CD4-positive, alpha-beta memory T cell (primary cell): ENCODE measurements at regions of chr3 and their contacts with region 1.

Region 1: DNA sequence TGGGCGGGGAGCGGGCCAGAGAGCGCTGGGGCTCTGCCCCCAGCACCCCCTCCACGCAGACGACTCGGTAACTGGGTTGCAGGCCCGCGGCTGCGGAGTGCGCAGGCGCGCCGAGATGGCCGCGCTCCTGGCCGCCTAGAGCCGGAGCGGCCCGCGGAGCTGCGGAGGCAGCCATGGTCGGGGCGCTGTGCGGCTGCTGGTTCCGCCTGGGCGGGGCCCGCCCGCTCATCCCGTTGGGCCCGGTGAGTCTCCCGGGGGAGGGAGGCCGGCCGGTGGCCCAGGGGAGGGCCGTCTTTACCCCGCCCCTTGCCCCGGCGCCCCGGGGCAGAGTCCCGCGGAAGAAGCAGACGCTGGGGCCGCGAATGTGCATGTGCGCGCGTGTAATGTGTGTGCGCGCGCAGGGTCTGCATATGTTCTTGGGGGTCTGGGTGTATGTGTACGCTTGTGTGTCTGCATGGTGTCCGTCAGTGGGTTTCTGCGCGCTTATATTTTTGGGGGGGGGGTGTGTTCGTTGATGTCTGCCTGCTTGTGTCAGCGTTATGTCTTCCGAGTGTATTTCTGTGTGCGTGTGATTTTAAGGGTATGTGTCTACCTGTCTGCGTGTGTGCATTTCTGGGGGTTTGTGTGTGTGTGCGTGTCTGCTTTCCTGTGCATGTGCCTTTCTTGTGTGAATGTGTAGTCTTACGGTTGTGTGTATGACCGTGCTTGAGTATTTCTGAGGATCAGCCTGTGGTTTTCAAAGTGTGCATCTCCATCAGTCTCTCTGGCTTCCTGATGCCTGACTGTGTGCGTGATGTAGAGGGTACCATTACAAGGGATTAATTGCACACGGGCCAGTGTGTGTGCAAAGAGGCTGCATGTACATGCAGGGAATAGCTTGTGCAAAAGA is at the start of gene ABHD14A:
- DNase-seq: peak; percentile 75 to 80 (median 76)
- H3K4me3 ChIP-seq: peak within 1 kb of the TSS; percentile 81 to 95
- H3K4me3 Mint-ChIP-seq: peak within 1 kb of the TSS; percentile 90 to 99 (median 96)
- H3K27ac ChIP-seq: peak within 1 kb of the TSS; percentile 78
- H3K27ac Mint-ChIP-seq: peak within 1 kb of the TSS; percentile 68 to 98 (median 96)
- H3K4me1 ChIP-seq: peaks cover 32% of the 10 kb centered on the region
- H3K4me1 Mint-ChIP-seq: peaks cover 28 to 53% (median 41%) of the 10 kb centered on the region in 4 donors
- H3K27me3 ChIP-seq: no peaks in the 10 kb centered on the region
- H3K27me3 Mint-ChIP-seq: no peaks in the 10 kb centered on the region
- total RNA-seq, gene ABHD14A: 23.7 to 24.5 TPM

Region 2: GRCh38 chr3:51269466-51269865 is 705.7 kb before region 1 on chr3:
- CTCF ChIA-PET with region 1: no interaction called
- POLR2A ChIA-PET with region 1: no interaction called
- intact Hi-C with region 1: no loop called
- DNase-seq: no peak
- H3K4me3 ChIP-seq: no peak overlapping the region
- H3K4me3 Mint-ChIP-seq: no peak overlapping the region
- H3K27ac ChIP-seq: no peak overlapping the region
- H3K27ac Mint-ChIP-seq: peak overlapping the region in 1 of 7 donors; percentile 16
- H3K4me1 ChIP-seq: peaks cover 24% of the 10 kb centered on the region
- H3K4me1 Mint-ChIP-seq: peaks cover 12 to 23% (median 14%) of the 10 kb centered on the region in 4 donors
- H3K27me3 ChIP-seq: no peaks in the 10 kb centered on the region
- H3K27me3 Mint-ChIP-seq: peaks cover 0 to 1% of the 10 kb centered on the region in 2 donors

Region 3: DNA sequence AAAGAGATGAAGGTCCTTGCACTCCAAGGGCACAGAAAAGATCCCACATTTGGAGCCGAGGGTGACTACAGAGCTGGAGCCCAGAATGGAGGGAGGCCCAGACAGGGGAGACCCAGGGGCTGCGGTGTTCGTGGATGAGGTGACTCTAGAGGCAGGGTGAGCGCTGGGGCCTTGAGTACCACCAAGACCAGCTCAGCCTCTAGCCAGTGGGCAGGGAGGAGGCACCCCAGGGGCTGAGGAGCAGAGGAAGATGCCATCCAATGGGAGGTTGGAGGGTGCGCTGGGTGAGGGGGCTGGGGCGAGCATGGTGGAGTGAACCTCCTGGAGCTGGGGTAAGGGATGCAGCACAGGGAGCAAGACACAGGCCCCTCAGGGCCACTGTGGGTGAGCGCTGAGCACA is 46.8 kb before region 1 on chr3:
- CTCF ChIA-PET with region 1: no interaction called
- POLR2A ChIA-PET with region 1: no interaction called
- intact Hi-C with region 1: no loop called
- DNase-seq: no peak
- H3K4me3 ChIP-seq: no peak overlapping the region
- H3K4me3 Mint-ChIP-seq: no peak overlapping the region
- H3K27ac ChIP-seq: no peak overlapping the region
- H3K27ac Mint-ChIP-seq: no peak overlapping the region
- H3K4me1 ChIP-seq: no peaks in the 10 kb centered on the region
- H3K4me1 Mint-ChIP-seq: no peaks in the 10 kb centered on the region
- H3K27me3 ChIP-seq: no peaks in the 10 kb centered on the region
- H3K27me3 Mint-ChIP-seq: no peaks in the 10 kb centered on the region

Region 4: DNA sequence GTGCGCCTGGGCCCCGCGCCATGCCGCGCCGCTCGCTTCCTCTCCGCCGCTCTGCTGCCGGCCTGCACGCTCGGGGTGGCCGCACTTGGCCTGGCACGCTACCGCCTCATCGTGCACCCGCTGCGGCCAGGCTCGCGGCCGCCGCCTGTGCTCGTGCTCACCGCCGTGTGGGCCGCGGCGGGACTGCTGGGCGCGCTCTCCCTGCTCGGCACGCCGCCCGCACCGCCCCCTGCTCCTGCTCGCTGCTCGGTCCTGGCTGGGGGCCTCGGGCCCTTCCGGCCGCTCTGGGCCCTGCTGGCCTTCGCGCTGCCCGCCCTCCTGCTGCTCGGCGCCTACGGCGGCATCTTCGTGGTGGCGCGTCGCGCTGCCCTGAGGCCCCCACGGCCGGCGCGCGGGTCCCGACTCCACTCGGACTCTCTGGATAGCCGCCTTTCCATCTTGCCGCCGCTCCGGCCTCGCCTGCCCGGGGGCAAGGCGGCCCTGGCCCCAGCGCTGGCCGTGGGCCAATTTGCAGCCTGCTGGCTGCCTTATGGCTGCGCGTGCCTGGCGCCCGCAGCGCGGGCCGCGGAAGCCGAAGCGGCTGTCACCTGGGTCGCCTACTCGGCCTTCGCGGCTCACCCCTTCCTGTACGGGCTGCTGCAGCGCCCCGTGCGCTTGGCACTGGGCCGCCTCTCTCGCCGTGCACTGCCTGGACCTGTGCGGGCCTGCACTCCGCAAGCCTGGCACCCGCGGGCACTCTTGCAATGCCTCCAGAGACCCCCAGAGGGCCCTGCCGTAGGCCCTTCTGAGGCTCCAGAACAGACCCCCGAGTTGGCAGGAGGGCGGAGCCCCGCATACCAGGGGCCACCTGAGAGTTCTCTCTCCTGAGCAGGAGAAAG is 19.1 kb before region 1 on chr3:
- CTCF ChIA-PET with region 1: interaction called, 14 read pairs
- POLR2A ChIA-PET with region 1: interaction called, 9 read pairs
- intact Hi-C with region 1: loop called (anchors 1 kb)
- DNase-seq: peak in 1 of 5 donors; percentile 26
- H3K4me3 ChIP-seq: no peak overlapping the region
- H3K4me3 Mint-ChIP-seq: peak overlapping the region; percentile 24 to 67 (median 42)
- H3K27ac ChIP-seq: no peak overlapping the region
- H3K27ac Mint-ChIP-seq: no peak overlapping the region
- H3K4me1 ChIP-seq: peaks cover 15% of the 10 kb centered on the region
- H3K4me1 Mint-ChIP-seq: peaks cover 0 to 8% (median 4%) of the 10 kb centered on the region in 4 donors
- H3K27me3 ChIP-seq: peaks cover 8% of the 10 kb centered on the region
- H3K27me3 Mint-ChIP-seq: peaks cover 5 to 12% of the 10 kb centered on the region in 2 donors

Region 5: GRCh38 chr3:52714335-52715302 is 739.4 kb after region 1 on chr3:
- CTCF ChIA-PET with region 1: no interaction called
- POLR2A ChIA-PET with region 1: no interaction called
- intact Hi-C with region 1: no loop called
- DNase-seq: no peak
- H3K4me3 ChIP-seq: no peak overlapping the region
- H3K4me3 Mint-ChIP-seq: no peak overlapping the region
- H3K27ac ChIP-seq: no peak overlapping the region
- H3K27ac Mint-ChIP-seq: no peak overlapping the region
- H3K4me1 ChIP-seq: no peaks in the 10 kb centered on the region
- H3K4me1 Mint-ChIP-seq: peaks cover 1 to 6% (median 3%) of the 10 kb centered on the region in 4 donors
- H3K27me3 ChIP-seq: no peaks in the 10 kb centered on the region
- H3K27me3 Mint-ChIP-seq: no peaks in the 10 kb centered on the region